ENCODE measurements at regions of chr2 and their contacts with region 1.

Region 1: DNA sequence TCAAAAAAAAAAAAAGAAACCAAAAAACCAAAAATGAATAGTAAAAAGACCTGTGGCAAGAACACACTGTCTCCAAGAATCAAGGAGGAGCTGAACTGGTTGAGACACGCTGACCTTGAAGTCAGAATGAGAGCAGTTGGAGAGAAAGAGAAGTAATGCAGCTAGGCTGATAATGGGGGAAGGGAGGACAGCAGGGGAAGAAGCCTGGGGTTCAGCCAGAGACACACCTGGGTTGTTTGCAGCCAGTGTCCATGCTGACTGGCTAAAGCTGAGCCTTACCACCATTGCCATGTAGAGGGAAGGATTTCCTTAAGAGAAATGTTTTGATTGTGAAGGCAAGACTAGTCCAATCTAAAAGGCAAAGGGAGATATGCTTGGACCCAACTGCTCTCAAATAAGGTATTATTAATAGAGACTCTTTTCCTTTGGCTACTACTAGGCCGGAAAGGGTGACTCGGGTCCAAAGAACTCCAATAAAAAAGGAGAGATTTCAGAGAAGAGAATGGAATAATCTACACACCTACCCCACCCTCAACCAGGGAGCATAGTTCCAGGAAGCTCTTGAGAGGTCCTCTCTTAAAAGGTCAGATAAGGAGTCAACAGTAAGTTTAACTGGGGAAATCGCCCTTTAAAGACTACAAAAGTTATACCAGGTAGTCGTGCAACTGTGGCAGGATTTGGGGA is 25.2 kb upstream of the REL start:
- DNase-seq: no peak
- ATAC-seq: no peak
- H3K4me3 ChIP-seq: no peak overlapping the region
- H3K27ac ChIP-seq: no peak overlapping the region
- H3K4me1 ChIP-seq: peaks cover 16% of the 10 kb centered on the region
- H3K27me3 ChIP-seq: no peaks in the 10 kb centered on the region; a peak in 1 of 5 replicates
- CTCF ChIP-seq: no peak
- EP300 ChIP-seq: no peak
- POLR2A ChIP-seq: no peak
- RAD21 ChIP-seq: no peak

Region 2: GRCh38 chr2:60899230-60899891 is 43.2 kb after region 1 on chr2:
- CTCF ChIA-PET with region 1: no interaction called
- POLR2A ChIA-PET with region 1: no interaction called
- in situ Hi-C with region 1: no loop called
- intact Hi-C with region 1: loop called (anchors 1 kb)
- DNase-seq: no peak
- ATAC-seq: no peak
- H3K4me3 ChIP-seq: no peak overlapping the region
- H3K27ac ChIP-seq: no peak overlapping the region
- H3K4me1 ChIP-seq: no peaks in the 10 kb centered on the region
- H3K27me3 ChIP-seq: no peaks in the 10 kb centered on the region
- CTCF ChIP-seq: no peak
- EP300 ChIP-seq: no peak
- POLR2A ChIP-seq: no peak
- RAD21 ChIP-seq: no peak